Vagina (tissue), 2 donors: ENCODE measurements at regions of chr1 and their contacts with region 1.

Region 1: GRCh38 chr1:162023547-162024501 is at the start of gene OLFML2B:
- DNase-seq: peak in 1 of 2 donors; percentile 85
- H3K4me3 ChIP-seq: peak within 1 kb of the TSS; percentile 59 to 63
- H3K27ac ChIP-seq: peak within 1 kb of the TSS; percentile 71
- H3K4me1 ChIP-seq: peaks cover 15% of the 10 kb centered on the region
- H3K27me3 ChIP-seq: no peaks in the 10 kb centered on the region
- CTCF ChIP-seq: peak in 1 of 3 experiments; percentile 7
- POLR2A ChIP-seq: no peak
- total RNA-seq, gene OLFML2B: 12.8 TPM

Region 2: DNA sequence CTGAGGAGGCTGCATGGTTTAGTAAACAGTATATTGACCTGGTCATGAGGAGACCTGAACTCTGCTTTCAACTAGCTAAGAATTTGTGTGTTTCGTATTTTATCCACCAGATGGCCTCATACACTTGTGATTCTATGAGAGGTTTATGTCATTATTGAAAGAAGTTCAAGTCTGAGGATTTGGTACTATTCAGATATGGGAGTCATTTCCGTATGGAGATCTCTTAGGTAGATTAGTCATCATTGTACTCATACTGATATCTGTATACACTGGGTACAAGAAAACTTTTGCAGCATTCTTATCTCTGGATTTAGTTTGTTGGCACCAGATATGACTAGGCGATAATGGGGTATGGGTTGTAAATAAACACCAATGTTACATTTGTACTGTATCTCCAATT is 231.1 kb before region 1 on chr1:
- intact Hi-C with region 1: no loop called
- DNase-seq: no peak
- H3K4me3 ChIP-seq: no peak overlapping the region
- H3K27ac ChIP-seq: no peak overlapping the region
- H3K4me1 ChIP-seq: no peaks in the 10 kb centered on the region
- H3K27me3 ChIP-seq: no peaks in the 10 kb centered on the region
- CTCF ChIP-seq: peak in 2 of 3 experiments; percentile 23 to 63
- POLR2A ChIP-seq: no peak

Region 3: DNA sequence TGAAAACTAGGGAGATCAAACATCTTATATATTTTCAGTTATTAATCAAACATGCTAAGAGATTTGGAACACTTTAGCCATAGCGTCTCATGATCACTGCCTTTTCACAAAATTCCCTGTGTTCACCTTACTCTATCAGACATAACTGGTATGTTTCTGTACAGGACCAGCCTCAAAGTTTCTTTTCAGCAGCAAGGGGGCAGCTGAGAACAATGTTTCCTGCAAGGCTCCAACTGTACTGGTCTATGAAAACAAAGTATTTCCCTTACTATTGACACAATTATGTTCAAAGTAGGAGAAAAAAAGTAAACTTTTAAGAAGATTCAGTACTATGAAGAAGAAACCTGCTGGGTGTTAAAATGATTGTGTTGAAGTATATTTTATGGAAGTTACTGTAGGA is 159.2 kb before region 1 on chr1:
- intact Hi-C with region 1: loop called (anchors 10 kb)
- DNase-seq: no peak
- H3K4me3 ChIP-seq: no peak overlapping the region
- H3K27ac ChIP-seq: no peak overlapping the region
- H3K4me1 ChIP-seq: no peaks in the 10 kb centered on the region
- H3K27me3 ChIP-seq: no peaks in the 10 kb centered on the region
- CTCF ChIP-seq: peak in 1 of 3 experiments; percentile 28
- POLR2A ChIP-seq: no peak

Region 4: DNA sequence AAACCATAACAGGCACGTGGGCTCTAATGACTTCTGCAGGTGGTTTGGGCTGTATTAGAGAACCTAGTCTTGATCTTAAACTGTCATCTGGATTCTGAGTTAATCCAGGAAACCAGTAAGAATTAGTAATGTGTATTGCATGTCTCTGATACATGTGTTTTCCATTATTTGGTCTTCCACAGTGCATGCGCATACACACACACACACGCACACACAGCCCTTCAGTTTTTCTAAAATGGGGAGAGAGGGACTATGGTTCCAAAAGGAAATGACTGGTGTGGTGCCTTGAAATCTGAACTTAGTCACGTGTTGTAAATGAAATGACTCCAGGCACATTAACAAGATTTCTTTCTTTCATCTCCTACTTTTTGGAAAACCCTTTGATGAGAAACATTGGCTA is 67.7 kb before region 1 on chr1:
- intact Hi-C with region 1: loop called (anchors 10 kb)
- DNase-seq: no peak
- H3K4me3 ChIP-seq: no peak overlapping the region
- H3K27ac ChIP-seq: no peak overlapping the region
- H3K4me1 ChIP-seq: peaks cover 12% of the 10 kb centered on the region
- H3K27me3 ChIP-seq: no peaks in the 10 kb centered on the region
- CTCF ChIP-seq: no peak
- POLR2A ChIP-seq: no peak

Region 5: DNA sequence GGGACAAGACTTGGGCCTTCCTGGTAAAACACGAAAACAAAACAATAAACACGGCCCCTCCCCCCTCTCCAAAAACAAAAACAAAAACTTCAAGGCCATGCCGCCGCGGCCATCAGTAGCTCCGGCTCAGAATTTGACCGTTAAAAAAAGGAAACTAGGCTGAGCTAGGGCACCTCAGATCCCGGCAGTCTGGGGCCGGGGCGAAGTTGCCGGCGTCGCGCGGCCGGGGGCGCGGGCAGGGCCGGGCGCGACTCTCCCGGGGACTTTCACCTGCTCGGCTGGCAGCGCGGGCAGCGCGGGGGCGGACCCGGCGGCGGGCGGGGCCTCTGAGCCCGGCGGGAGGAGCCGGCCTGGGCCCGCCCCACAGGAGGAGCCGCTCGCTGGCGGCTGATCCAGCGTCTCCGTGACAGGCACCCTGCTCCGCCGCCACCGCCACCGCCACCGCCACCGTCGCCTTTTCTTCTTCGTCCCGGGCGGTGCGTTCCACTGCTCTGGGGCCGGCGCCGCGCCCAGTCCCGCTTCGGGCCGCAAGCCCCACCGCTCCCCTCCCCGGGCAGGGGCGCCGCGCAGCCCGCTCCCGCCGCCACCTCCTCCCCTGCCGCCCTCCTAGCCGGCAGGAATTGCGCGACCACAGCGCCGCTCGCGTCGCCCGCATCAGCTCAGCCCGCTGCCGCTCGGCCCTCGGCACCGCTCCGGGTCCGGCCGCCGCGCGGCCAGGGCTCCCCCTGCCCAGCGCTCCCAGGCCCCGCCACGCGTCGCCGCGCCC is 45.7 kb after region 1 on chr1 and contains the start of gene NOS1AP:
- intact Hi-C with region 1: no loop called
- DNase-seq: no peak
- H3K4me3 ChIP-seq: peak within 1 kb of the TSS; percentile 57 to 84
- H3K27ac ChIP-seq: peak within 1 kb of the TSS; percentile 20
- H3K4me1 ChIP-seq: peaks cover 11% of the 10 kb centered on the region
- H3K27me3 ChIP-seq: no peaks in the 10 kb centered on the region
- CTCF ChIP-seq: no peak
- POLR2A ChIP-seq: peak in 1 of 2 donors; percentile 18
- total RNA-seq, gene NOS1AP: 2.0 TPM